Ovary (tissue), 10 donors: ENCODE measurements at regions of chr3 and their contacts with region 1.

Region 1: GRCh38 chr3:12891985-12892839 is 50.8 kb upstream of the RPL32 start:
- DNase-seq: peak in 4 of 5 donors; percentile 54 to 61 (median 56)
- H3K4me3 ChIP-seq: no peak overlapping the region
- H3K27ac ChIP-seq: no peak overlapping the region
- H3K4me1 ChIP-seq: no peaks in the 10 kb centered on the region
- H3K27me3 ChIP-seq: no peaks in the 10 kb centered on the region
- CTCF ChIP-seq: peak; percentile 84 to 93 (median 91)
- EP300 ChIP-seq: no peak
- POLR2A ChIP-seq: no peak

Region 2: GRCh38 chr3:12841149-12841970 is 50.9 kb before region 1 on chr3 and contains the start of gene RPL32:
- intact Hi-C with region 1: no loop called
- DNase-seq: peak; percentile 84 to 91 (median 87)
- H3K4me3 ChIP-seq: peak within 1 kb of the TSS; percentile 71
- H3K27ac ChIP-seq: peak within 1 kb of the TSS; percentile 77 to 89
- H3K4me1 ChIP-seq: peaks cover 3% of the 10 kb centered on the region
- H3K27me3 ChIP-seq: no peaks in the 10 kb centered on the region
- CTCF ChIP-seq: peak; percentile 72 to 83 (median 81)
- EP300 ChIP-seq: no peak
- POLR2A ChIP-seq: peak; percentile 85
- total RNA-seq, gene RPL32: 1,975 to 3,878 (median 2,959) TPM

Region 3: GRCh38 chr3:12868039-12869034 is 23.9 kb before region 1 on chr3:
- intact Hi-C with region 1: loop called in 1 of 4 experiments (anchors 2 kb)
- DNase-seq: peak; percentile 67 to 86 (median 83)
- H3K4me3 ChIP-seq: peak overlapping the region; percentile 5
- H3K27ac ChIP-seq: no peak overlapping the region
- H3K4me1 ChIP-seq: no peaks in the 10 kb centered on the region
- H3K27me3 ChIP-seq: no peaks in the 10 kb centered on the region
- CTCF ChIP-seq: peak; percentile 39 to 87 (median 79)
- EP300 ChIP-seq: no peak
- POLR2A ChIP-seq: no peak